Posterior vena cava (tissue), 2 donors: ENCODE measurements at regions of chr15 and their contacts with region 1.

Region 1: DNA sequence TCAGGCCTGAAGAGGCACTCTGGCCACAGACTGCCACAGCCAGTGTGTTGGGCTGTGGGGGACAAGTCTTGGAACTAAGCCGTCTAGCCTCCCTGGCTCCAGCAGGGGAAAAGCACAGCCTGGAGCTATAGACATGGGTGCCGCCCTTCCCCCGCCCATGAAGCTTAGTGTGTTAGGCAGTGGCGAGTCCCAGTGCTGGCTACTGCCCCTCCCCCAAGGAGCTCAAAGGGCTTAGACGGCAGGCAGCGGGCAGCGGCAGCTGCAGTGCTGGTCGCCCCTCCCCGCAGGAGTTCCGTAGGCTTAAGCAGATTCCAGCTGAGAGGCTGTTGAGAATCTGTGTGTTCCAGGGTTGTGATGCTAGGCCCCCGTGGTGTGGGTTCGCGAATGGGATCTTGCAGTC is 135.8 kb upstream of the RORA start:
- DNase-seq: no peak

Region 2: GRCh38 chr15:60679256-60679655 is 685.6 kb before region 1 on chr15:
- intact Hi-C with region 1: loop called in 1 of 2 experiments (anchors 5 kb)
- DNase-seq: no peak